Activated T-helper 1 cell treated with anti-CD3 and anti-CD28 coated beads, Interleukin-12 subunit alpha, Interleukin-12 subunit beta, Interleukin-2, Interleukin-4 antibody, amounts not matched to agents 30 ng/mL and 10 ng/mL and 1 ng/mL, durations not matched to agents 14 hours and 24 hours and 36 hours (primary cell): ENCODE measurements at regions of chr7 and their contacts with region 1.

Region 1: GRCh38 chr7:11212080-11212711 is 238.5 kb downstream of the PHF14 start:
- DNase-seq: peak; percentile 26
- H3K4me3 Mint-ChIP-seq: no peak overlapping the region
- H3K27ac Mint-ChIP-seq: no peak overlapping the region
- H3K4me1 Mint-ChIP-seq: peaks cover 9% of the 10 kb centered on the region
- H3K27me3 Mint-ChIP-seq: no peaks in the 10 kb centered on the region

Region 2: GRCh38 chr7:10939911-10940703 is 272.1 kb before region 1 on chr7:
- intact Hi-C with region 1: loop called (anchors 1 kb)
- DNase-seq: peak; percentile 83
- H3K4me3 Mint-ChIP-seq: no peak overlapping the region
- H3K27ac Mint-ChIP-seq: no peak overlapping the region
- H3K4me1 Mint-ChIP-seq: peaks cover 33% of the 10 kb centered on the region
- H3K27me3 Mint-ChIP-seq: no peaks in the 10 kb centered on the region

Region 3: GRCh38 chr7:11054033-11054432 is 158.2 kb before region 1 on chr7:
- intact Hi-C with region 1: loop called (anchors 10 kb)
- DNase-seq: no peak
- H3K4me3 Mint-ChIP-seq: no peak overlapping the region
- H3K27ac Mint-ChIP-seq: no peak overlapping the region
- H3K4me1 Mint-ChIP-seq: no peaks in the 10 kb centered on the region
- H3K27me3 Mint-ChIP-seq: no peaks in the 10 kb centered on the region

Region 4: DNA sequence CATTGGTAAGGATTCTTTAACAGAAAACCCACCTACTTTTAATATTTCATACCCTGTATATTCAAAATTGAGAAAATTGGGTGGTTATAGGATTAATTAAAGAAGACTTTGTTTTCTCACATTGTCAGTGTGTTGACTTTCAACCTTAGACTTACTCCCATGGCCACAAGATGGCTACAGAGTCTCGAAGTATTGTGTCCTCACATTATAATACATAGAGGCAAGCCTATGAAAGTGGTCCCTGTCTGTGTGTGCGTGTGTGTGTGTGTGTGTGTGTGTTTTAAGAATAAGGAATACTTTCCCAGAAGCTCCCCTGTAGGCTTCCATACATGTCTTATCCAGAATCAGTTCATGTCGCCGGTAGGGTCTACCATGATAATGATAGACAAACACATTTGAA is 58.5 kb before region 1 on chr7:
- intact Hi-C with region 1: loop called (anchors 5 kb)
- DNase-seq: no peak
- H3K4me3 Mint-ChIP-seq: no peak overlapping the region
- H3K27ac Mint-ChIP-seq: no peak overlapping the region
- H3K4me1 Mint-ChIP-seq: no peaks in the 10 kb centered on the region
- H3K27me3 Mint-ChIP-seq: no peaks in the 10 kb centered on the region